CD8-positive, alpha-beta T cell (primary cell): ENCODE measurements at regions of chr12 and their contacts with region 1.

Region 1: DNA sequence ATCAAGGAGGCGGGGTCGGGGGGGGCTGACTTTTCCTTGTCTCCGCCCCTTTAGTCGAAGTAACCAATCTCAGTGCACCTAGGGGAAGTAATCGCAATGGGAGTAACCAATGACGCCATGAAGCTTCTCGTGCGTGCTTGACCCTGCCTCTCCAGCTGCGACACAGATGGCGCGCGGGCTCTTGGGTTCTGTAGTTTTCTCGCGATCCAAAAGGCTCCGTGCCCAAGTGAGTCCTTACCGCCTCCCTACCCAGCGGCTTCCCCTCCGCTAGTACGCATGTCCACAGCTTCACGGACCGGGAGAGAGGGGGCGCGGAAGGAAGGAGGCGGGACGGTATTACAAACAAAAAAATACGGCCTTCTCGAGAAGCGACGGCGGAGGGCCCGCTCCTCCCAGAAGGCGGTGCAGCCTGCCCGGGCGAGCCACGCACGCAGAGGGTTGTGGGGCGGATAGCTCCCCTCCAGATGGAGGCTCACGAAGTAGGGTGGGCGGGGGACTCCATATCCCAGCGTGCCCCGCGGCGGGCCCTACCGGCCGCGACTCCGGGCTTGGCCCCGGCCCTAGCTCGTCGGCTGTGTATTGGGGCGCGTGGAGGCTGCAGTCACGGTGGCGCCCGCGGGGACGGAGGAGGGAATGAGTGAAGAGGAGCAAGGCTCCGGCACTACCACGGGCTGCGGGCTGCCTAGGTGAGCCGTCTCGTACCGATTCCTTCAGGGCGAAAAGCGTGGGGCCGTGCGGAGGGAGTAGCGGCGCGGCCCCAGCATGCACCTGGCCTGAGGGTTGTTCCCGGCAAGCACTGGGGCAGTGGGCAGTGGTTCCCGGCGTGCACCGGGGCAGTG is at the start of gene TARBP2:
- DNase-seq: peak; percentile 92 to 99 (median 98)
- ATAC-seq: peak; percentile 77
- H3K4me3 ChIP-seq: peak within 1 kb of the TSS; percentile 64 to 87
- H3K4me3 Mint-ChIP-seq: peak within 1 kb of the TSS; percentile 93
- H3K27ac ChIP-seq: peak within 1 kb of the TSS; percentile 90 to 95
- H3K27ac Mint-ChIP-seq: peak within 1 kb of the TSS; percentile 97
- H3K4me1 ChIP-seq: peaks cover 28% of the 10 kb centered on the region
- H3K4me1 Mint-ChIP-seq: peaks cover 48% of the 10 kb centered on the region
- H3K27me3 ChIP-seq: no peaks in the 10 kb centered on the region
- H3K27me3 Mint-ChIP-seq: no peaks in the 10 kb centered on the region
- CTCF ChIP-seq: no peak
- total RNA-seq, gene TARBP2: 22.9 to 23.9 TPM

Region 2: DNA sequence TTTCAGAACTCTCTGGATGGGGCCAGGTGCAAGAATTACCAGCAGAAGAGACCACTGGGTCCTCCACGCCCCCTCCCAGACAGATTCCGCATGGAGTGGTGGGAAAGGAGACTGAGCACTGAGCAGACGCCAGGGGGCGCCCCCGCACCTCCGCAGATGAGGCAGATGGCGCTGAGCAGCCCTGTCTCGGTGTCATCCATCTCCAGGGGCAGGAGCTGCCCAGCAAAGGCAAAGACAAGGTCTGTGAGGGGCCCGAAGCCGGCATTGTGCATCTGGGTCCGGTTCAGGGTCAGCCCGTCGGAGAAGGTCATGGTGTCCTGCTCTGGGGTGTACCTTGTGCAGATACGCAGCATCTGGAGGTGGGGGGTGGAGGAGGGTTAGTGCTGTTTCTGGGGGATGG is 287.6 kb before region 1 on chr12:
- CTCF ChIA-PET with region 1: no interaction called
- POLR2A ChIA-PET with region 1: no interaction called
- intact Hi-C with region 1: loop called in 1 of 2 experiments (anchors 10 kb)
- DNase-seq: peak; percentile 59 to 92 (median 85)
- ATAC-seq: peak; percentile 74
- H3K4me3 ChIP-seq: no peak overlapping the region
- H3K4me3 Mint-ChIP-seq: no peak overlapping the region
- H3K27ac ChIP-seq: no peak overlapping the region
- H3K27ac Mint-ChIP-seq: peak overlapping the region; percentile 80
- H3K4me1 ChIP-seq: peaks cover 55% of the 10 kb centered on the region
- H3K4me1 Mint-ChIP-seq: peaks cover 62% of the 10 kb centered on the region
- H3K27me3 ChIP-seq: no peaks in the 10 kb centered on the region
- H3K27me3 Mint-ChIP-seq: no peaks in the 10 kb centered on the region
- CTCF ChIP-seq: peak; percentile 85

Region 3: GRCh38 chr12:53344824-53345485 is 156.0 kb before region 1 on chr12:
- CTCF ChIA-PET with region 1: interaction called, 5 read pairs
- POLR2A ChIA-PET with region 1: interaction called, 11 read pairs
- intact Hi-C with region 1: no loop called
- DNase-seq: peak; percentile 44 to 85 (median 70)
- ATAC-seq: peak; percentile 85
- H3K4me3 ChIP-seq: peak overlapping the region; percentile 61 to 72
- H3K4me3 Mint-ChIP-seq: peak overlapping the region; percentile 93
- H3K27ac ChIP-seq: peak overlapping the region; percentile 27 to 47
- H3K27ac Mint-ChIP-seq: peak overlapping the region; percentile 77
- H3K4me1 ChIP-seq: peaks cover 16% of the 10 kb centered on the region
- H3K4me1 Mint-ChIP-seq: peaks cover 15% of the 10 kb centered on the region
- H3K27me3 ChIP-seq: no peaks in the 10 kb centered on the region
- H3K27me3 Mint-ChIP-seq: no peaks in the 10 kb centered on the region
- CTCF ChIP-seq: peak; percentile 58

Region 4: GRCh38 chr12:53441040-53441833 is 59.8 kb before region 1 on chr12 and contains the start of gene PRR13:
- CTCF ChIA-PET with region 1: no interaction called
- POLR2A ChIA-PET with region 1: interaction called, 11 read pairs
- intact Hi-C with region 1: loop called (anchors 1 kb)
- DNase-seq: peak; percentile 95 to 99 (median 99)
- ATAC-seq: peak; percentile 95
- H3K4me3 ChIP-seq: peak within 1 kb of the TSS; percentile 86 to 98
- H3K4me3 Mint-ChIP-seq: peak within 1 kb of the TSS; percentile 97
- H3K27ac ChIP-seq: peak within 1 kb of the TSS; percentile 85 to 94
- H3K27ac Mint-ChIP-seq: peak within 1 kb of the TSS; percentile 97
- H3K4me1 ChIP-seq: peaks cover 36% of the 10 kb centered on the region
- H3K4me1 Mint-ChIP-seq: peaks cover 46% of the 10 kb centered on the region
- H3K27me3 ChIP-seq: no peaks in the 10 kb centered on the region
- H3K27me3 Mint-ChIP-seq: no peaks in the 10 kb centered on the region
- CTCF ChIP-seq: no peak
- total RNA-seq, gene PRR13: 131 to 155 TPM

Region 5: DNA sequence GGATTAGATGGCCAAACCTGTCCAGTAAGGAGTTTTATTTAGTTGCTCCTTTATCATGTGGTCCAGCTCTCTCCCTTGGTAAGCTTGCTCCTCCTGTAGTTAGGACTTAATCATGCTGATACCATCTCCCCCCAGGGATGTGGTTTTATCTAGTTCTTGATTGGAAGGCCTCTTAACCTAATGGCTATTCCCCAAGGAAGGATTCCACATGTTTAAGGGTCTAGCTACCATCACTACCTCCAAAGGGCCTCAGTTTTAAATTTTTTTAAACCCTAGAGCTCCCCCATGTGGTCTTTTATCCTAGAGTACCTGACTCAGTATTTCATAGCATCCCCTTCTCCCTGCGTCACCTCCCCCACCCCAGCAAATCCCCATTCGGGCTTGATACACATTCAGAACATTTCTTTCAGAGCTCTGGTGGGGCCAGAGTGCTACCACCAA is 24.2 kb before region 1 on chr12:
- CTCF ChIA-PET with region 1: interaction called, 6 read pairs
- POLR2A ChIA-PET with region 1: interaction called, 16 read pairs
- intact Hi-C with region 1: loop called in 1 of 2 experiments (anchors 5 kb)
- DNase-seq: peak in 2 of 9 experiments; percentile 19 to 37
- ATAC-seq: peak; percentile 37
- H3K4me3 ChIP-seq: no peak overlapping the region
- H3K4me3 Mint-ChIP-seq: no peak overlapping the region
- H3K27ac ChIP-seq: no peak overlapping the region
- H3K27ac Mint-ChIP-seq: no peak overlapping the region
- H3K4me1 ChIP-seq: peaks cover 25% of the 10 kb centered on the region
- H3K4me1 Mint-ChIP-seq: peaks cover 52% of the 10 kb centered on the region
- H3K27me3 ChIP-seq: no peaks in the 10 kb centered on the region
- H3K27me3 Mint-ChIP-seq: no peaks in the 10 kb centered on the region
- CTCF ChIP-seq: no peak

Region 6: DNA sequence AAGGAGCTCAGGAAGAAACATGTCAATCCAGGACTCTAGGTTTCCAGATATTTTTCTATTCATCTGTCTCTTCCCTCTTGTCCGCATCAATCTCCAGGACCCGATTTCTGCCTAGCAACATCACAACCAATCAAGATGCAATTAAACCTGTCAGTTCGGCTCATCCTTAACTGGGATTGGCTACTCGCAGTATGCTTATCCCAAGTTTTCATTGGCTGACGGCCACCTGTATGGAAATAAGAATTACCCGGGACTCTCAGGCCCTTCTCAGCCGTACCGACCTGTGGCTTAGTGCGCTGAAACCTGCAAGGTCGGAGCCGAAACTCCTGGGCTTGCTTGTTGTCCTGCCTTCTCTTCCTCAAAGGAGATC is 195.3 kb after region 1 on chr12:
- CTCF ChIA-PET with region 1: no interaction called
- POLR2A ChIA-PET with region 1: no interaction called
- intact Hi-C with region 1: no loop called
- DNase-seq: peak in 1 of 9 experiments; percentile 41
- ATAC-seq: no peak
- H3K4me3 ChIP-seq: no peak overlapping the region
- H3K4me3 Mint-ChIP-seq: peak overlapping the region; percentile 38
- H3K27ac ChIP-seq: no peak overlapping the region
- H3K27ac Mint-ChIP-seq: no peak overlapping the region
- H3K4me1 ChIP-seq: peaks cover 22% of the 10 kb centered on the region
- H3K4me1 Mint-ChIP-seq: peaks cover 28% of the 10 kb centered on the region
- H3K27me3 ChIP-seq: peaks cover 29 to 35% of the 10 kb centered on the region in 2 experiments
- H3K27me3 Mint-ChIP-seq: peaks cover 78% of the 10 kb centered on the region
- CTCF ChIP-seq: no peak

Region 7: DNA sequence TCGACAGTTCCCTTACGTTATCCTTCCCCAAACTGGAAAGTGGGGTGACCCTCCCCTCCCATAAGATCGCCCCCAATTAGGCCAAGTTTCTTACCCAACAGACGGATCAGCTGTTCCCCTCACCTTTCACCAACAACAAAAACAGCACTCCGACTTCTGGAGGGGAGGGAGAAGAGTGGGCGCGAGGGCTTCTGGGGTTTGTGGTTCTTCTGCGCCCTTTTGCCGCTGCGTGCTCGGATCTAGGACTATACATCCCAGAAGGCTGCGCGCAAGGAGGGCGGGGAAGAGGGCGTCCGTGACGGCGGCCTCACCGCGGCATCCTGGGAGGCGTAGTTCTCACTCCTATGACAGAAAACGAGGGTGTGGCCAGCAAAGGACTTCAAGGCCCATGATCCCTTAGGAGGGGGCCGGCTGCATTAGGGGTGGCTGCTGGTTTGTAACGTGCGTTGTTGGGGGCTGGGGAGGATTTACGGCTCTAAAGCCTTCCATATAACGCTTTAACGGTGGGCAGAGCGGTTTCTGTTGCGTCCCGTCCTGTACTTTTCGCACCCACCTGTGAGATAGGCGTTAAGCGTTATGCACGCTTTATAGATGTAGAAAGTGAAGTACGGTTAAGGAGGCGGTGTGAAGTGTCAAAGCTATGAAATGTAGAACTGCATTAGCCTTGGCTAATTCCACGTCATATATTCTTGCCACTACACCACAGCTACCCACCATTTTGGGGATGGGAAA is 226.5 kb after region 1 on chr12 and contains the start of gene CALCOCO1:
- CTCF ChIA-PET with region 1: no interaction called
- POLR2A ChIA-PET with region 1: interaction called, 3 read pairs
- intact Hi-C with region 1: loop called (anchors 1 kb)
- DNase-seq: peak; percentile 95 to 99 (median 97)
- ATAC-seq: peak; percentile 98
- H3K4me3 ChIP-seq: peak within 1 kb of the TSS; percentile 67 to 76
- H3K4me3 Mint-ChIP-seq: peak within 1 kb of the TSS; percentile 95
- H3K27ac ChIP-seq: peak within 1 kb of the TSS; percentile 65 to 72
- H3K27ac Mint-ChIP-seq: peak within 1 kb of the TSS; percentile 92
- H3K4me1 ChIP-seq: peaks cover 18% of the 10 kb centered on the region
- H3K4me1 Mint-ChIP-seq: peaks cover 30% of the 10 kb centered on the region
- H3K27me3 ChIP-seq: no peaks in the 10 kb centered on the region
- H3K27me3 Mint-ChIP-seq: no peaks in the 10 kb centered on the region
- CTCF ChIP-seq: no peak
- total RNA-seq, gene CALCOCO1: 49.2 to 49.5 TPM

Region 8: DNA sequence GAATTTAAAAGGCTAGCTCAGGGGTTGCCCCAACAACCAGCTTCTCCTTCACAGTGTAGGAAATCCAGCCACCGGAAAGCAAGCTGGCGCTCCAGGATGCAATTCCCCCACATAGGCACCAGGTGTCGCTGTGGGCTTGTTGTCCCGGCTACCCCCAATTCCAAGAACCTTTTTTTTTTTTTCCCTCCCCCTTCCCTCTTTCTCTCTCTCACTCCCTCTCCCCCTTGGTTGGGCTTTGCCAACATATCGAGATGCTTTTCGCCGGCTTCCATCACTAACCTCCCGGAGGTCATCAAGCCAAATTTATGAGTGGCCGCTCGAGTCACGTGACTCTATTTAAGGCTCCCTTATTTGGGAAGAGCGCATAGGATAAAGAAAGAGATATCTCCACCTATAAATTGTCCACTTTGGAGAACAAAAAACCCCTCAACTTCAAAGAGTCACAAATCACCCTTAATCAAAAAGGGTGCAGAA is 531.7 kb after region 1 on chr12 and contains the start of gene HOXC5:
- CTCF ChIA-PET with region 1: no interaction called
- POLR2A ChIA-PET with region 1: no interaction called
- intact Hi-C with region 1: no loop called
- DNase-seq: peak; percentile 40 to 82 (median 64)
- ATAC-seq: peak; percentile 66
- H3K4me3 ChIP-seq: peak within 1 kb of the TSS; percentile 22 to 35
- H3K4me3 Mint-ChIP-seq: peak within 1 kb of the TSS; percentile 67
- H3K27ac ChIP-seq: no peak within 1 kb of the TSS
- H3K27ac Mint-ChIP-seq: no peak within 1 kb of the TSS
- H3K4me1 ChIP-seq: peaks cover 28% of the 10 kb centered on the region
- H3K4me1 Mint-ChIP-seq: peaks cover 26% of the 10 kb centered on the region
- H3K27me3 ChIP-seq: peaks cover 58 to 61% of the 10 kb centered on the region in 2 experiments
- H3K27me3 Mint-ChIP-seq: peaks cover 72% of the 10 kb centered on the region
- CTCF ChIP-seq: peak; percentile 85
- total RNA-seq, gene HOXC5: not detected